BJ (cell line): ENCODE measurements at regions of chr2 and their contacts with region 1.

Region 1: GRCh38 chr2:219294356-219295351 is 14.5 kb downstream of the PTPRN start:
- DNase-seq: no peak
- H3K4me3 ChIP-seq: peak overlapping the region; percentile 41
- H3K27me3 ChIP-seq: peaks cover 1% of the 10 kb centered on the region; the same call in 1 of the 2 replicates
- CTCF ChIP-seq: peak; percentile 92

Region 2: GRCh38 chr2:219177552-219178376 is 116.9 kb before region 1 on chr2 and contains the start of gene RETREG2:
- CTCF ChIA-PET with region 1: interaction called, 90 read pairs
- POLR2A ChIA-PET with region 1: no interaction called
- DNase-seq: peak; percentile 72
- H3K4me3 ChIP-seq: peak within 1 kb of the TSS; percentile 95
- H3K27me3 ChIP-seq: no peaks in the 10 kb centered on the region
- CTCF ChIP-seq: 0 out of 2 replicates have a peak, but pooled peaks have one; percentile 26
- polyA plus RNA-seq, gene RETREG2: 95.9 and 131 TPM in 2 replicates

Region 3: DNA sequence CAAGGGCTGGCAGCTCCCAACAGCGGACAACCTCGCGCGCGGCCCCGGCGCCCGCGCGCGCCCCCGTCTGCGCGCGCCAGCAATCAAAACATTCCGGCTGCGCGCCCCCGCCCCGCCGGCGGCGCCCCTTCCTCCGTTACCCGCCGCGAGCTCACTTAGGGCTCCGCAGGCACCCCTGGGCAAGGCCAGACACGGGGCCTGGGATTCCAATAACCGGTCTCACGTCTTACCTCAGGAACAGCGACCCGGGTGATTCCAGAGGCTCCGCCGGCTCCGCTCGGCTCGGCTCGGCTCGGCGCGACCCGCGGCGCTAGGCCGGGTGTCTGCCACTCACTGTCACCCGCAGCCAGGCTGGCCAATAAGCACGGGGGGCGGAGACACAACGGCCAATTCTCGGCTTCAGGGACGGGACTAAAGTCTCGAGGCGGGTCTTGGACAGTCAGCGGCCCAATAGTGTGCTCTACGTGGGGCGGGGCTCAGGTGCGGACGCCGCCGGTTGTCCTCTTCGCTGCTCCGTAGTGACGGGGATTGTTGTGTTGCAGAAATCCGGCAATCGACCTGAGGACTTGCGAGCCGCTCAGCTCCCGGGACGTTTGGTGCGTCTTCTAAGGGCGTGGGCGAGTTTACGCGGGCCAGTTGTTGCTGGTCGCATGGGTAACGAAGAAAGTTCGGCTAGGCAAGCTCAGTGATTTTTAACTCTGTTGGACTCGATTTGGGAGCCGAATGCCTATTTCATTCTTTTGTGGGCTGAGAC is 65.2 kb before region 1 on chr2 and contains the starts of genes ANKZF1 and ATG9A:
- CTCF ChIA-PET with region 1: interaction called, 29 read pairs
- POLR2A ChIA-PET with region 1: no interaction called
- DNase-seq: peak; percentile 97
- H3K4me3 ChIP-seq: peak within 1 kb of the TSS; percentile 64
- H3K27me3 ChIP-seq: no peaks in the 10 kb centered on the region
- CTCF ChIP-seq: no peak
- polyA plus RNA-seq, gene ANKZF1: 30.0 and 37.7 TPM in 2 replicates
- polyA plus RNA-seq, gene ATG9A: 105 and 132 TPM in 2 replicates

Region 4: GRCh38 chr2:219278655-219279516 is 15.8 kb before region 1 on chr2 and contains the start of gene DNAJB2:
- CTCF ChIA-PET with region 1: interaction called, 403 read pairs
- POLR2A ChIA-PET with region 1: no interaction called
- DNase-seq: peak; percentile 95
- H3K4me3 ChIP-seq: peak within 1 kb of the TSS; percentile 56
- H3K27me3 ChIP-seq: no peaks in the 10 kb centered on the region
- CTCF ChIP-seq: no peak
- polyA plus RNA-seq, gene DNAJB2: 45.0 and 57.3 TPM in 2 replicates

Region 5: DNA sequence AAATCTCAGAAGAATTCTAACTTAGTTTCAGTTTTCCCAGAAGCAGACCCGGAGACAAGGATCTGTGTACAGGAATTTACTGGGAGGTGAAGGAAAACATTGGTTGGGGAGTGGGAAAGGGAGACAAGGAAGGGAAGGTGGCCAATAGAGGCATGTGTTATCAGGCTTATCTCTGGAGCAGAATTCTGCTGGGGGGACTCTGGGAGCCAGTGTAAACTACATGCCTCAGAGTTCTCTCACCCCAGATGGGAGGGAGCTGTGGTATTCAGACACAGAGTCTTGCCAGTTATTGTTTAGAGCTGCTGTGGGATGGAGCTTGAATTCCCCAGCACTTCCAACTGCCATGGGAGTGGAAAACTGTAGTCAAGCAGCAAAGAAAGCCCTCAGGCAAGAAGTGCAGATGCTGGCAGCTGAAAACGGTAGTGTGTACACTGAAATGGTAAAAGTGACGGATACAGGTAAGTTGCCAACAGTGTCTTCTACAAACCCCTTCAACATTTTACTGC is 74.1 kb after region 1 on chr2:
- CTCF ChIA-PET with region 1: interaction called, 15 read pairs
- POLR2A ChIA-PET with region 1: no interaction called
- DNase-seq: peak; percentile 88
- H3K4me3 ChIP-seq: no peak overlapping the region
- H3K27me3 ChIP-seq: no peaks in the 10 kb centered on the region
- CTCF ChIP-seq: no peak